ENCODE measurements at regions of chr6 and their contacts with region 1.

Region 1: DNA sequence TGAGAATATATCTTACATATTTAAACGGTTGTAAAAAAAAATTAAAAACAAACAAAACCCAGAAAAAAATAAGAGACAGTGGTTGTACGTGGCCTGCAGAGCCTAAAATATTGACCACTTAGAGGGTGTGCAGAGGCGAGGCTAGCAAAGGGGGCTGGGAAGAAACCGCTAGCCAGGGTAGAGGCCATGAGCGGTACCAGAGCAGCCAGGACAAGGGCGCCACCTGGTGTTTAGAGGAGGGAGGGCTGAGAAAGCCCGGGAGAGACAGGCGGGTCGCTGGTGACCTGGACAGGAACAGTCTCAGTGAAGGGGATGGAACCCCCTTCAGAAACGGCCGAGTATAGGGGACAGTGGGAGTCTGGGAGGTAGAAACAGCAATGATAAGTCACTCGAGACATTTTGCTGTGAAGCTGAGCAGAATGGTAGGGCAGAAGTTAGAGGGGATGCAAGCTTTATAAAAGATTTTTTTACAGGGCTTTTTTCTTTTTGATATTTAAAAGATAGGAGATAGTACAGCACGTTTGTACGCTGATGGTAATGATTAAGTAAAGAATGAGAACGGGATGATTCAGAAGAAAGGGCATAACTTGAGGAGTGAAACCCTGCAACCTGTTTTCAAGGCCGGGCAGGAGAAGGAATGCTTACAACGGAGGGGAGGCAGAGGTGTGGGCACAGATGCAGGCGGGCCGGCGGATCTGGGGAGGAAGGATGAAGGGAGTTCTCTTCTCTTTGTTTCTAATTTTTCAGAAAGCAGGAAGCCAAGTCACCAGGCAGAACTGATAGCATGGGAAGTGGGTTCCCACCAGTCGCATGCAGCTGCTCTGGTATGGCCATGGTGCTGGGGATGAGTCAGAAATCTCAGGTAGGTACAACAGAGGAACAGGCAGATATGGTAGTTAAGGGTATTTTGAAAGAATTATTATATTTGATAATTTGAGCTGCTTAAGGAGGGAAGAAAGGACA is 76.2 kb downstream of the FAM229B start:
- DNase-seq: peak; percentile 71
- H3K4me3 Mint-ChIP-seq: no peak overlapping the region
- H3K27ac Mint-ChIP-seq: no peak overlapping the region
- H3K4me1 Mint-ChIP-seq: peaks cover 6% of the 10 kb centered on the region
- H3K27me3 Mint-ChIP-seq: peaks cover 51% of the 10 kb centered on the region
- CTCF ChIP-seq: peak; percentile 85

Region 2: DNA sequence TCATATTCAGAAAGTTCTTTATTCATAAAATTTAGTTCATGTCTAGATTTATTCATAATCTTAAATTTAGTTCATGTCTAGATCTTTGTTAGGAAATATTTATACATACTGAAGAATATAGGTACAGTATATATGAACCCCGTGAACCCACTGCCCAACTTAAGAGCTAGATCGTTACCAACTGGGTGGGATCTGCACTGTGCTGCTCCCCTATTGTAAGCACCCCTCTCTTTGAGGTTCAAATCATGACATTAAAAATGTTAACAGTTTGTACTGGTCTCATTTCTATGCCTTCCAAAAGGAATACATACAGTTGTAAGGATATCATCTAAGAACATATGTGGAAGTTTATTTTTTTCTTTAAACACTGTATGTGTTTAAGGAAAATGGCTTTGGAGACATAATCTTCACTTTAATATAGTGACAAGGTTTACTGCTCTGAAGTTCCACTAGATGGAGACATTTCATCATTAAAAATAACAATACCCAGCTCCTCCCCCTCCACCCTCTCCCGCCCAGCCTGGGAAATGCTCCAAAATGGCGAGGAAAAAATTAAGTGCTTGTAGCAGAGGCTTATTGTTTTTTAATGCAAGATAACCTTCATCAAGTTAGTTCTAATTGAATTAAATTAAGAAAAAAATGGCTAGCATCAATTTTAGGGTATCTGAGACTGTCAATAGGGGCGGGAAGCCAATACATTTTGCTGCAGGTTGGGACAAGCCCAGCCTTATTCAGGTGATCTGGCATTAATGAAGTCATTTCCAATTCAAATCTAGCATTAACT is 453.8 kb before region 1 on chr6:
- CTCF ChIA-PET with region 1: interaction called, 49 read pairs
- POLR2A ChIA-PET with region 1: interaction called, 3 read pairs
- intact Hi-C with region 1: loop called (anchors 1 kb)
- DNase-seq: peak; percentile 69
- H3K4me3 Mint-ChIP-seq: peak overlapping the region; percentile 28
- H3K27ac Mint-ChIP-seq: no peak overlapping the region
- H3K4me1 Mint-ChIP-seq: peaks cover 7% of the 10 kb centered on the region
- H3K27me3 Mint-ChIP-seq: no peaks in the 10 kb centered on the region
- CTCF ChIP-seq: peak; percentile 56

Region 3: DNA sequence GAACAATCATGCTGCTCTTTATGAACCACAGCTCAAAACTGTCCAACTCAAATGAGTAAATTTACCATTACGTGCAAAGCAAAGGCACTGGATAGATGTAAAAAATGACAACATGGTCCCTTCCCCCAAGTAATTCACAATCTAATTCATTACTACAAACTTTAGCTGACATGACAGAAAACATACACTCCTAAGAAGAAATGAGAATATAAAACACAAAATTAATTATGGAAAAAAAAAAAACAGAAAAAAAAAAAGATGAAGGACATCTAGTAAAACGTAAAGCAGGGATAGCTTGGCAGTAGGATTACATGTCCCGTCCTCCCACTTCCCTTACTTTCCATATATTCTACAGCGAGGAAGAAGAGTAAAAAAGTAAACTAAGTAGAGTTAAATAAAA is 82.0 kb before region 1 on chr6:
- CTCF ChIA-PET with region 1: interaction called, 143 read pairs
- POLR2A ChIA-PET with region 1: interaction called, 16 read pairs
- intact Hi-C with region 1: loop called (anchors 1 kb)
- DNase-seq: no peak
- H3K4me3 Mint-ChIP-seq: no peak overlapping the region
- H3K27ac Mint-ChIP-seq: no peak overlapping the region
- H3K4me1 Mint-ChIP-seq: no peaks in the 10 kb centered on the region
- H3K27me3 Mint-ChIP-seq: no peaks in the 10 kb centered on the region
- CTCF ChIP-seq: no peak

Region 4: DNA sequence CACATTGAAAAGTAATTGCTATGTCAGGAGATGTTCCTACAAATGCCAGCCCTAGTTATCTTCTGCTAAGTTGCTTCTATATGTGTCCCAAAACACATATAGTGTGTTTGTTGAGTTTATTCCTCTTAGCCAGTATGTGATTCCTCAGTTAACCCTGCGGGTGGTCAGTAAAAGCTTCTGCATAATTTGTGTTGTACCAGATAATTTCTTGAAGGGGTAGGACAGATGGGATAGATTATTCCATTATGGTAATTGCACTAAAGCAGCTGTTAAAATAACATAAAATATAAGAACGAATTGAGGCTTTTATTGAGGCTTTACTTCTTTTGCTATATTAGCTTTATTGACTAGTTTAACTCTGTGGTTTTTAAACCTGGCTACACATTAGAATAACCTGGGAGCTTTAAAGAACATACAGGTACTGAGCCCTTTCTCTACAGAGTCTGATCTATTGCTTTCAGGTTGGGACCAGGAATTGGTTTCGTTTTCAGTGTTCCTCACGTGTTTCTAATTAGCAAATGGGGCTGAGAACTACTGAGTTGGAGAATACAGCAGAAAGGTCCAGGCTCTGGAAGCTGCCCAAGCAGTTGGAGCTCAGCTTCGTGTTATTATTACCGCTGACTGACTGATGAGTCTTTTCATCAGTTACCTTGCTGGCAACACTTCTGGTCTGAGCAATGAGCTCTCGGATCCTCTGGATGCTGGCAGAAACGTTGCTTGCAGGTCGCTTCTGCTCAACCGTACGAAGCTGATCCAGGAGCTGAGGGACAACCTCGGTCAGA is 19.2 kb before region 1 on chr6:
- CTCF ChIA-PET with region 1: interaction called, 10 read pairs
- POLR2A ChIA-PET with region 1: interaction called, 3 read pairs
- intact Hi-C with region 1: no loop called
- DNase-seq: no peak
- H3K4me3 Mint-ChIP-seq: no peak overlapping the region
- H3K27ac Mint-ChIP-seq: no peak overlapping the region
- H3K4me1 Mint-ChIP-seq: no peaks in the 10 kb centered on the region
- H3K27me3 Mint-ChIP-seq: no peaks in the 10 kb centered on the region
- CTCF ChIP-seq: no peak